Posterior cingulate gyrus (tissue), 11 donors: ENCODE measurements at regions of chr17 and their contacts with region 1.

Region 1: GRCh38 chr17:18038861-18039534 is at the starts of genes ATPAF2 and GID4:
- DNase-seq: peak; percentile 98 to 100 (median 100)

Region 2: DNA sequence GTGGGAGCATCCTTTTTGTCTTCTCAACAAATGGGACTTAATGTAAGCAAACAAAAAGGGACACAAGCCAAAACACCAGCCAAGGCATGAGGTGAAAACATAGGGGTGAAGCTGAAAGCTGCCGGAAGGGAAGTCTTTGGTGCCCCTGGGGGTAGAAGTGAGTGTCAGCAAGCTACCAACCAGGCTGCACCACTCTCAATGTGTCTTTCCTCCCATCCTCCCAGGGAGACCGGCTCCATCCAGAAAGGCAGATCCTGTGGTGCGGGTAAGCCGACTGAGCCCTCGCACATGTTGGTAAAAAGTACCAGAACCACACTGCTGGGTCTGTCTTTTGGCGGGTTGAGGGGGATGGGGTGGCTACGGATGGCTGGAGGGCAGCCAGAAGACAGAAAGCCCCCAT is 150.2 kb before region 1 on chr17:
- intact Hi-C with region 1: loop called (anchors 10 kb)
- DNase-seq: peak in 1 of 10 donors; percentile 67

Region 3: DNA sequence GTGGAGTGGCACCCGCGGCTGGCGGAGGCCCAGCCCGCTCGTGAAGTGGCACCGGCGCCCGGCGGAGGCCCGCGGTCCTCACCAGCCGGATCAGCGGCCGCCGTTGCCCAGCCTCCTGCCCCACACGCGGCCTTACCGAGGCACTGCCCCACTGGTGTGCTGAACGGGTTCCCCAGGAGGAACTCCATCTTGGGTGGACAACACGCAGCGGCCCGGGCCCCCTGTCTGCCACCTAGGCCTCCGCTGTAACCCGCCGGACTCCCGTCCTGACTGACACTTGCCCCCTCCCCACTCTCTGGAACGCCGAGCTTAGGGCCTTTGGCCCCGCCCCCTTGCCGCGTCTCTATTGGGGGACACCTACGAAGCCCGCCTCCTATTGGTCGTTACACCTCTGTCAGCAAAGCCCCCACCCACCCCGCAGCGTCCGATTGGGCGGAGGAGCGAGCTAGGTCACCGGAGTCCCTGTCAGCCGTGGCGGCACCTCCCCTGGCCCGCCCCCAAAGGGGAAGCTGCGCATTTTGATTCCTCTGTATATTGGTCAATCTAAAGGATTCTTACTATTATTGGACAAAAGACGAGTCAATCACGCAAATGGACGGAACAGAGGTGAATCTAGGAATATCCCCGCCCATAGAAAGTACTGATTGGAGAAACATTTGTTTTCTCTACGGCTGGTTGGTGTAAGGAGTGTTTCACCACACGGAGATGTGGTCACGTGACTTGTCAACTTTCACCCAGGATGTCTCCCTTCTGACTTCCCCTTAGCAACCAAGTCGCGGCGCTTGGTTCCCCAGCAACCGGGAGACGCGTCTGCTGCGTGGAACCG is 66.7 kb before region 1 on chr17 and contains the starts of genes DRC3 and TOM1L2:
- intact Hi-C with region 1: loop called (anchors 1 kb)
- DNase-seq: peak; percentile 100

Region 4: GRCh38 chr17:18087610-18088491 is 48.9 kb after region 1 on chr17 and contains the start of gene DRG2:
- intact Hi-C with region 1: loop called (anchors 10 kb)
- DNase-seq: peak; percentile 84 to 98 (median 90)